ENCODE measurements at regions of chr9 and their contacts with region 1.

Region 1: DNA sequence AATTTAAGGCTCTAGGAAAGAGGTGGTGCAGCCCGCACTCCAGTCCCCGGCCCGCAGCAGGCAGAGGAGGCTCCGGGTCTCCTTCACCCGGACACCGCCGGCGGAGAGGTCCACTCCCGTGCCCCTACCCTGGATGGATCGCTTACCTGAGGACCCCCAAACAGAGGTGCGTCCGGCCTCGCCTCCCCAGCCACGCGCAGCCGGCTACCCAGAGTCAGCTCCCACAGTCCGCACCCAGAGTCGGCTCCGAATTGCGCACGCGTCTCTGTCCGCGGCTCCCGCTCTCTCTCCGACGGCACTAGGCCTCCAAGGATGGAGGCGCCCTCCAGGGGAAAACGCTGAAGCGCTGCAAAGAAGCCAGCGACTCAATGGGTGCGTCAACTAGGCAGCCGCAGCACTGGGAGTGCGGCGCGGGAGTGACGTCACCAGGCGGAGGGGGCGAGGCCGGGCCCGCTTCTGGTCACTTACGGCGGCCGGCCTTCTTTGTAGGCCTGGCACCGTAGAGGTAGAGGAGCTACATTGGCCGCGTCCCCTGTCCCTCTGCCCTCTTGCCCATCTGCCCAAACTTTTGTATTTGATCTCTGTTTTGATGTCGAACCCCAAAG is at the start of gene ELP1:
- DNase-seq: peak; percentile 79 to 96
- H3K4me3 ChIP-seq: peak within 1 kb of the TSS; percentile 80 to 89
- H3K27ac ChIP-seq: peak within 1 kb of the TSS; percentile 89 to 91
- H3K4me1 ChIP-seq: peaks cover 0 to 14% of the 10 kb centered on the region in 2 donors
- H3K27me3 ChIP-seq: no peaks in the 10 kb centered on the region
- CTCF ChIP-seq: peak; percentile 7 to 29 (median 13)
- total RNA-seq, gene ELP1: 8.8 TPM

Region 2: GRCh38 chr9:108953983-108954574 is 20.3 kb after region 1 on chr9:
- intact Hi-C with region 1: loop called (anchors 2 kb)
- DNase-seq: no peak
- H3K4me3 ChIP-seq: peak overlapping the region in 1 of 2 donors; percentile 11
- H3K27ac ChIP-seq: peak overlapping the region; percentile 78 to 79
- H3K4me1 ChIP-seq: no peaks in the 10 kb centered on the region
- H3K27me3 ChIP-seq: no peaks in the 10 kb centered on the region
- CTCF ChIP-seq: peak; percentile 60 to 68 (median 64)

Region 3: GRCh38 chr9:109035684-109036423 is 102.0 kb after region 1 on chr9:
- intact Hi-C with region 1: loop called (anchors 5 kb)
- DNase-seq: peak in 1 of 2 donors; percentile 74
- H3K4me3 ChIP-seq: no peak overlapping the region
- H3K27ac ChIP-seq: peak overlapping the region in 1 of 2 donors; percentile 55
- H3K4me1 ChIP-seq: peaks cover 0 to 11% of the 10 kb centered on the region in 2 donors
- H3K27me3 ChIP-seq: no peaks in the 10 kb centered on the region
- CTCF ChIP-seq: no peak

Region 4: GRCh38 chr9:109119439-109120203 is 185.8 kb after region 1 on chr9 and contains the start of gene TMEM245:
- intact Hi-C with region 1: loop called (anchors 2 kb)
- DNase-seq: peak; percentile 94 to 98
- H3K4me3 ChIP-seq: peak within 1 kb of the TSS; percentile 83 to 98
- H3K27ac ChIP-seq: peak within 1 kb of the TSS; percentile 56 to 77
- H3K4me1 ChIP-seq: peaks cover 9 to 34% of the 10 kb centered on the region in 2 donors
- H3K27me3 ChIP-seq: no peaks in the 10 kb centered on the region
- CTCF ChIP-seq: no peak
- total RNA-seq, gene TMEM245: 49.7 TPM

Region 5: GRCh38 chr9:109320742-109321448 is 387.1 kb after region 1 on chr9 and contains the start of gene EPB41L4B:
- intact Hi-C with region 1: loop called (anchors 10 kb)
- DNase-seq: peak; percentile 18 to 91
- H3K4me3 ChIP-seq: peak within 1 kb of the TSS; percentile 64 to 68
- H3K27ac ChIP-seq: no peak within 1 kb of the TSS
- H3K4me1 ChIP-seq: peaks cover 2 to 3% of the 10 kb centered on the region in 2 donors
- H3K27me3 ChIP-seq: peaks cover 6% of the 10 kb centered on the region
- CTCF ChIP-seq: peak; percentile 89 to 96 (median 95)
- total RNA-seq, gene EPB41L4B: not detected

Measured in ascending aorta (tissue), 2 donors.